Heart right ventricle (tissue), 16 donors: ENCODE measurements at regions of chr5 and their contacts with region 1.

Region 1: DNA sequence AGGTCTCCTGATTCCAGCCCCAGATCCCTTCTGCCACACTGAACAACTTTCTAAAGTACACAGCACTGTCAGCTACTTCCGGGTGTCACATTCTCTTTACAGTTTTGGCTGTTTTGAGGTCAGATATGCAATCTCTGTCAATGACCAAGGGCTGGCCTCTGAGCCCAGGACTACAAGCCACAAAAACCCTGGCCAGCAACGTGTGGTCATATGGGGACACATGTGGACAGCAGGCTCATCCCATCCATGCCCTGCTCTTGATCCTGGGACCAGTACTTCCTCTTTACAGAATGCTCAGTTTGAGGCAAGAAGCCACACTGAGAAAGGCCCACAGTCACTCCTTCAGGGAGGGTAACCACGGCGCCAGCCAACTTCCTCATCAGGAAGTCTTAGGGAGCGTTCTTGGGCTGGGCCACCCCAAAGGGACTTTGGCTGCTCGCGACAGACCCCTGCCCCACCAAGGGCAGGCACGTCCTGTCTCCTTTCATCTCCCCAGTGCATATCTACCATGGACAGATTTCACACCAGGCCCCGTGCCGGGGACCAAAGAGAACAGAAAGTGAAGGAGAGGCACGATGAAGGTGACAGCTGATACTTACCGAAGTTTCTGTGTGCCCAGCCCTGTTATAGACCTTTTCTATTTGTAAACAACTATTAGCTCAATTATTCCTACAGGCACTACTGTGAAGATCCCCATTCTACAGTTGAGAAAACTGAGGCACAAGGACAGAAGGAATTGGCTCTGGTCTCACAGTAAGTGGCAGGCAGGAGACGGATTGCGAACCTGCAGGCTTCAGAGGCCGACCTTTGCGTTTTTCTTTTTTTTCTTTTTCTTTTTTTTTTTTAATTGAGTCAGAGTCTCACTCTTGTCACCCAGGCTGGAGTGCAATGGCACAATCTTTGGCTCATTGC is 37.3 kb downstream of the STK10 start:
- DNase-seq: peak; percentile 42 to 52
- ATAC-seq: peak in 7 of 8 donors; percentile 61 to 82 (median 76)
- H3K4me3 ChIP-seq: peak overlapping the region in 1 of 10 donors; percentile 13
- H3K27ac ChIP-seq: peak overlapping the region in 8 of 10 donors; percentile 2 to 83 (median 29)
- H3K4me1 ChIP-seq: peaks cover 0 to 78% (median 35%) of the 10 kb centered on the region in 9 donors
- H3K27me3 ChIP-seq: no peaks in the 10 kb centered on the region
- CTCF ChIP-seq: no peak

Region 2: DNA sequence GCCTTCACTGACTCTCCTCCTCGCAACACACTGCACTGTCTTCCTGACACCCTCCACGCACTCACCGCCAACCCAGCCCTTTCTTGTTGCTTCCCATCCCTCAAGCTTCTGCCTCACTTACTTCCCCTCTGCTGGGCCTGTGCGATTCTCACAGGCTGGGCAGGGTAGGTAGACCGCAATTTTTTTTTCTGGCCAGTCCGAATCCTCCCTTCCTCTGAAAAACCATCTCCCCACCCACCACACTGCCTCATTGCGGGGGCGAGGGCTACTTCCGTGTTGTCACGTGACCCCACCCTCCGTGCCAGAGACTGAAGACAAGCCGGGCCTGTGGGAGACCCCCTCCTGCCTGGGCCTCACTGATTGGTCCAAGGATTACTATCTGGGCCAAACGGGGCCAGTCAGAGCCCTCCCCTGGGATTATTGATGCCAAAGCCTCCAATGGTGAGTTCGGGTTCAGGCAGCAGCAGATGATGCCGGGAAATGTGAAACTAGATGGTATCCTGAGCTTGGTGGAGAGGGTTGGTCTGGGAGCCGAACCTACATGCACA is 35.8 kb before region 1 on chr5:
- intact Hi-C with region 1: loop called in 3 of 10 experiments (anchors 5 kb)
- DNase-seq: peak; percentile 54 to 56
- ATAC-seq: peak in 7 of 8 donors; percentile 14 to 53 (median 24)
- H3K4me3 ChIP-seq: peak overlapping the region in 1 of 10 donors; percentile 30
- H3K27ac ChIP-seq: peak overlapping the region in 6 of 10 donors; percentile 3 to 84 (median 27)
- H3K4me1 ChIP-seq: peaks cover 9 to 94% (median 53%) of the 10 kb centered on the region in 9 donors
- H3K27me3 ChIP-seq: no peaks in the 10 kb centered on the region
- CTCF ChIP-seq: no peak

Region 3: GRCh38 chr5:172266676-172267092 is 115.9 kb after region 1 on chr5:
- intact Hi-C with region 1: no loop called
- DNase-seq: no peak
- ATAC-seq: peak in 6 of 8 donors; percentile 22 to 74 (median 60)
- H3K4me3 ChIP-seq: no peak overlapping the region
- H3K27ac ChIP-seq: peak overlapping the region in 6 of 10 donors; percentile 0 to 64 (median 34)
- H3K4me1 ChIP-seq: peaks cover 9 to 50% (median 24%) of the 10 kb centered on the region in 9 donors
- H3K27me3 ChIP-seq: no peaks in the 10 kb centered on the region
- CTCF ChIP-seq: no peak